Activated CD8-positive, alpha-beta T cell treated with anti-CD3 and anti-CD28 coated beads for 36 hours (primary cell): ENCODE measurements at regions of chr6 and their contacts with region 1.

Region 1: DNA sequence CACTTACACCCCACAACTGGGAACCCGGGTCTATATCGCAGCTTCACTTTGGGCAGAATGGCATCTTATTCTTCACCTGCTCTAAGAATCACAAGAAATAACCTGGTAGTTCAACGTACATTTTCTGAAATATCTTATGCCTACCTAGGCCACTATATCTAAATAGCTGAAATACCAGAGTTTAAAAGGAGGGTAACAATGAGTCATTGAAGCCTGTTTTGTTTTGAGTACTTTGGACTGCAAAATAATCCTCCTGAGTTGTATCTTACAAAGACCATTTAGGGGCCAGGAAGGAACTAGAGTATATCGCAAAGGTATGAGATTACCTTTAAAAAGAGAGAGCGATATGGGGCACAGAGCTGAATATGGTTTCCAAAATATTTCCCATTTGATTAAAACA is 96.7 kb upstream of the NUP153 start:
- DNase-seq: no peak
- ATAC-seq: no peak
- H3K4me3 Mint-ChIP-seq: no peak overlapping the region
- H3K27ac Mint-ChIP-seq: no peak overlapping the region
- H3K4me1 Mint-ChIP-seq: no peaks in the 10 kb centered on the region
- H3K27me3 Mint-ChIP-seq: peaks cover 8% of the 10 kb centered on the region
- CTCF ChIP-seq: no peak

Region 2: GRCh38 chr6:17584241-17584803 is 219.1 kb before region 1 on chr6:
- CTCF ChIA-PET with region 1: interaction called, 12 read pairs
- POLR2A ChIA-PET with region 1: interaction called, 3 read pairs
- intact Hi-C with region 1: no loop called
- DNase-seq: no peak
- ATAC-seq: peak; percentile 55
- H3K4me3 Mint-ChIP-seq: no peak overlapping the region
- H3K27ac Mint-ChIP-seq: no peak overlapping the region
- H3K4me1 Mint-ChIP-seq: peaks cover 11% of the 10 kb centered on the region
- H3K27me3 Mint-ChIP-seq: peaks cover 7% of the 10 kb centered on the region
- CTCF ChIP-seq: peak; percentile 83

Region 3: DNA sequence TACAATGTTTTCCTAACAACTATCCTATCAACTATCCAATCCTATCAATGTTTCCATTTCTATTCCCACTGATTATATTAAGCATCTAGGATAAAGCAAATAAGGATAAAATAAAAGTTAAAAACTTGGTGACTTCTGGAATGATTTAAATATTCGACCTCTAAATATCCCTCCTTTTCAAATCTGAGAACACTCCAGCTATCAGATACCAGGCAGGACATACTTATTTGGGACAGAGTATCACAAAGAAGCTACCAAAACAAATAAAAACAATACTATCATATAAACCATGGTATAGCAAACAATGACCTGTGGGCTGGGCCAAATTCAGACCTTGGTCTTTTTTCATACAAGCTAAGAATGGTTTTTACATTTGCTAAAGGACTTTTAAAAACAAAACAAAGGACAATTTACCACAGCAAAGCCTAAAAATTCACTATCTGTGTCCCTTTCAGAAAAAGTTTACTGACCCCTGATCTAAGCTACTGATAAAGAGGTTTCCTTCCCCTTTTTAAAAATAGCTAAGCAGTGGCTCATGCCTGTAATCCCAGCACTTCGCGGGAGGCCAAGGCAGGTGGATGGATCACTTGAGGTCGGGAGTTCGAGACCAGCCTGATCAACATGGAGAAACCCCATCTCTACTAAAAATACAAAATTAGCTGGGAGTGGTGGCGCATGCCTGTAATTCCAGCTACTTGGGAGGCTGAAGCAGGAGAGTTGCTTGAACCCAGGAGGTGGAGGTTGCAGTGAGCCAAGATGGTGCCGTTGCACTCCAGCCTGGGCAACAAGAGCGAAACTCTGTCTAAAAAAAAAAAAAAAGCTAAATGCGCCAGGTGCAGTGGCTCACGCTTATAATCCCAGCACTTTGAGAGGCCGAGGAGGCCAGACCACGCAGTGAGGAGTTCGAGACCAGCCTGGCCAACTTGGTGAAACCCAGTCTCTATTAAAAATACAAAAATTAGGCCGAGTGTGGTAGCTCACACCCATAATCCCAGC is 102.7 kb before region 1 on chr6:
- CTCF ChIA-PET with region 1: interaction called, 21 read pairs
- POLR2A ChIA-PET with region 1: no interaction called
- intact Hi-C with region 1: loop called (anchors 10 kb)
- DNase-seq: no peak
- ATAC-seq: no peak
- H3K4me3 Mint-ChIP-seq: peak overlapping the region; percentile 12
- H3K27ac Mint-ChIP-seq: peak overlapping the region; percentile 68
- H3K4me1 Mint-ChIP-seq: peaks cover 41% of the 10 kb centered on the region
- H3K27me3 Mint-ChIP-seq: no peaks in the 10 kb centered on the region
- CTCF ChIP-seq: no peak

Region 4: DNA sequence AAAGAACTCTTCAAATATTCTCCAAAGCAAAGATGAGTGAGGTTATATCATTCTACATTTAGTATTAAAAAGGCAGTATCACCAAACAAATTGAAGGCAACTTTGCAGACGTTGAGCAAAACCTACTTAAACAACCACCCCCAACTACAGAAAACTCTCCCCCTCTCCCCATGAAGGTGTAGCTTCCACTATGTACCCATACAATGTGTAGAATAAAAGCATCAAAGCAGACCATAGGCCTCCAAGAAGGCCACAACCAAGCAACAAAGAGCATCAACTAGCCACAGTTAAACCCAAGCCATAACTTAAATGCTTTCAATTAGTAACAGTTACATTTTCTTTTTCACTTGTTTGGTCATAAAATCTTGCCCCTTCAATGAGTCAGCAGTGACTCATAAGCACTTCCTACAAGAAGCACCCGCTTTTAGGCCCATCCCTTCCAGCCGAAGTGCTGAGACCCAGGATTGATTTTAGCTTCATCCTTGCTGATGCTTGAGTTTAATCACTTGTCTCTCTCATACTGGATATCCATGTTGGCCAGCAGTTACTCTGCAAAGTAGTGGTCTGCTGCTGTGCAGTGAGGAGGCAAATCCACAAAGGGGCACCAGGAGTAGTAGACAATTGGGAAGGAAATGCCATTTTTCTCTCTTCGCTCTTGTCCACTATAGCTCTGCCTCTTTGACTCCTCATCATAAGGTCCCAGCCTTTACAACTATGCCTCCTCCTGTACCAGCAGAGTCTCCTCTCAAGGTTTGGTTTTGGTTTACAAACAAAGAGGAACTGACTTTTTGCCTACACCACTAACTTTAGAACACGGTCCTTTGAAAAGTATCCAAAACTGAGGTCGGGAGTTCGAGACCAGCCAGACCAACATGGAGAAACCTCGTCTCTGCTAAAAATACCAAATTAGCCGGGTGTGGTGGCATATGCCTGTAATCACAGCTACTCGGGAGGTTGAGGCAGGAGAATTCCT is 88.2 kb before region 1 on chr6:
- CTCF ChIA-PET with region 1: interaction called, 15 read pairs
- POLR2A ChIA-PET with region 1: no interaction called
- intact Hi-C with region 1: no loop called
- DNase-seq: peak; percentile 69
- ATAC-seq: peak; percentile 94
- H3K4me3 Mint-ChIP-seq: peak overlapping the region; percentile 37
- H3K27ac Mint-ChIP-seq: peak overlapping the region; percentile 90
- H3K4me1 Mint-ChIP-seq: peaks cover 15% of the 10 kb centered on the region
- H3K27me3 Mint-ChIP-seq: no peaks in the 10 kb centered on the region
- CTCF ChIP-seq: no peak

Region 5: DNA sequence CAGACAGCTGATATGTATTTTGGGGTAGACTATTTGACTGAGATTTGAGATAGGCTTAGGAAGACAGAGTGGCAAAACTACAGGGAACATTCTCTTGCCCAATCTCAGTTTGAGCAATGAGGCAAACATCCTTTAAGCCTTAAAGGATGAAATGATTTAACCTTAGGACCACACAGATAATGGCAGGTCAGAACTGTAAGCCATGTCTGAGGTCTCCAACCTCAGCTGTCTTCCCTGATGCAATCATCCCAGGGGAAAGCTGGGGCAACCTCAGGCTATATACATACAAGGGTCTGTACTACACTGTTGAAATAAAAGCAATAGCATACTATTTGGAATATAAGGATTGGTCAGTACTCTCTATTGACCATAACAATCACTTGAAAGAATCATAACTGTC is 12.9 kb before region 1 on chr6:
- CTCF ChIA-PET with region 1: interaction called, 14 read pairs
- POLR2A ChIA-PET with region 1: no interaction called
- intact Hi-C with region 1: no loop called
- DNase-seq: no peak
- ATAC-seq: no peak
- H3K4me3 Mint-ChIP-seq: no peak overlapping the region
- H3K27ac Mint-ChIP-seq: no peak overlapping the region
- H3K4me1 Mint-ChIP-seq: no peaks in the 10 kb centered on the region
- H3K27me3 Mint-ChIP-seq: peaks cover 4% of the 10 kb centered on the region
- CTCF ChIP-seq: no peak

Region 6: GRCh38 chr6:17820055-17820454 is 16.6 kb after region 1 on chr6:
- CTCF ChIA-PET with region 1: interaction called, 19 read pairs
- POLR2A ChIA-PET with region 1: no interaction called
- intact Hi-C with region 1: no loop called
- DNase-seq: no peak
- ATAC-seq: no peak
- H3K4me3 Mint-ChIP-seq: no peak overlapping the region
- H3K27ac Mint-ChIP-seq: no peak overlapping the region
- H3K4me1 Mint-ChIP-seq: no peaks in the 10 kb centered on the region
- H3K27me3 Mint-ChIP-seq: peaks cover 13% of the 10 kb centered on the region
- CTCF ChIP-seq: no peak